ENCODE measurements at regions of chr19 and their contacts with region 1.

Region 1: GRCh38 chr19:57320180-57321084 is at the start of gene ZNF543:
- DNase-seq: peak; percentile 78 to 90 (median 84)
- ATAC-seq: peak; percentile 98
- H3K4me3 ChIP-seq: peak within 1 kb of the TSS; percentile 76
- H3K4me3 Mint-ChIP-seq: peak within 1 kb of the TSS; percentile 87 to 98 (median 94)
- H3K27ac ChIP-seq: peak within 1 kb of the TSS; percentile 83
- H3K27ac Mint-ChIP-seq: peak within 1 kb of the TSS; percentile 82 to 98 (median 96)
- H3K4me1 ChIP-seq: peaks cover 0 to 18% of the 10 kb centered on the region in 2 donors
- H3K4me1 Mint-ChIP-seq: peaks cover 14 to 30% (median 25%) of the 10 kb centered on the region in 7 donors
- H3K27me3 ChIP-seq: peaks cover 0 to 6% of the 10 kb centered on the region in 2 donors
- H3K27me3 Mint-ChIP-seq: peaks cover 20 to 31% (median 24%) of the 10 kb centered on the region in 5 donors
- total RNA-seq, gene ZNF543: 3.6 to 9.0 (median 8.0) TPM

Region 2: DNA sequence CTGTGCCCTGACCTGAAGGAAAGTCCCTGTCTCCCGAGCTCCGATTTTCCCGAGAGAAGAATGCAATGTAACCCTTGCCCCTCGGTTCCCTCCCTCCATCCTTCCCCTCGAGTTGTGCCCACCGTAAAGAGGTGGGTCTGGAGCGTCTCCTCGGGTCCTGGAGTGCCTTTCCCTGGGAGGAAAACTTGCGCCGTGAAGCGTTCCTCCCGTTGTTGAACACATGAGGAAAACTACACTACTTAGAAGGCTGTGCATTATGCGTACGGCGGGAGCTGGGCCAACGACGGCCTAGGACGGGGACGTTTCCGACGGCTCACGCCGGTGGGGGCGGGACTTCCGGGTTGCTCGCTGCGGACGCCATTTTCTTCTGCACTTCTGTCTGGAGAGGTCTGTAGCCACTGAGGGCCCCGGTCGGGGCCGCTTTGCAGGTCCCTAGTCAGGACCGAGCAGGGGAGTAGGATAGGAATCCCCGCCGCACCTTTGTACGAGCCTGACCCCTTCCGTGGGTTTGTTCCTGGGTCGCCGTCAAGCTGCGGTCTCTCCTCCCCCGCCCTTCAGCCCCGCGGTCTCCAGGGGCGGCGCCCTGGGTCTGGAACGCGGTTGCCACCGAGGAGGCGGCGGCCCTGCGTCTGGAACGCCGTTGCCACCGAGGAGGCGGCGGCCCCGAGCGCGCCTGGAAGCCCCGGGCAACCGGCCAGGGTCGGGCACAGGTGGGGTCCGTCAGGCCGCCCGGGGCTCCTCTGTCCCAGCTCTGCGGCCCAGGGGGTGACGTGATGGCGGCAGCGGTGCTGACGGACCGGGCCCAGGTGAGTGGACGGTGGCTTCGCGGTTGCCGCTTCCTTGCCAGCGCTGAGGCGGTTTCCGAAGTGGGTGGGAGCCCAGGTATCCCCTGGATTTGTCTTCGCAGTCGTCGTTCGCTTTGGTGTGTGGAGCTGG is 129.0 kb before region 1 on chr19 and contains the start of gene ZNF264:
- CTCF ChIA-PET with region 1: no interaction called
- POLR2A ChIA-PET with region 1: no interaction called
- intact Hi-C with region 1: loop called (anchors 1 kb)
- DNase-seq: peak; percentile 79 to 90 (median 86)
- ATAC-seq: peak; percentile 98
- H3K4me3 ChIP-seq: peak within 1 kb of the TSS; percentile 95
- H3K4me3 Mint-ChIP-seq: peak within 1 kb of the TSS; percentile 90 to 97 (median 94)
- H3K27ac ChIP-seq: peak within 1 kb of the TSS; percentile 85
- H3K27ac Mint-ChIP-seq: peak within 1 kb of the TSS; percentile 92 to 97 (median 95)
- H3K4me1 ChIP-seq: peaks cover 11 to 22% of the 10 kb centered on the region in 2 donors
- H3K4me1 Mint-ChIP-seq: peaks cover 20 to 40% (median 35%) of the 10 kb centered on the region in 7 donors
- H3K27me3 ChIP-seq: no peaks in the 10 kb centered on the region
- H3K27me3 Mint-ChIP-seq: peaks cover 0 to 11% (median 6%) of the 10 kb centered on the region in 5 donors
- total RNA-seq, gene ZNF264: 31.5 to 65.9 (median 44.3) TPM

Region 3: GRCh38 chr19:57288373-57288772 is 32.1 kb before region 1 on chr19:
- CTCF ChIA-PET with region 1: no interaction called
- POLR2A ChIA-PET with region 1: no interaction called
- intact Hi-C with region 1: no loop called
- DNase-seq: no peak
- ATAC-seq: no peak
- H3K4me3 ChIP-seq: no peak overlapping the region
- H3K4me3 Mint-ChIP-seq: peak overlapping the region in 1 of 10 donors; percentile 54
- H3K27ac ChIP-seq: no peak overlapping the region
- H3K27ac Mint-ChIP-seq: peak overlapping the region in 1 of 9 donors; percentile 5
- H3K4me1 ChIP-seq: no peaks in the 10 kb centered on the region
- H3K4me1 Mint-ChIP-seq: peaks cover 10 to 28% (median 18%) of the 10 kb centered on the region in 7 donors
- H3K27me3 ChIP-seq: no peaks in the 10 kb centered on the region
- H3K27me3 Mint-ChIP-seq: no peaks in the 10 kb centered on the region

Region 4: GRCh38 chr19:57302020-57302465 is 18.4 kb before region 1 on chr19:
- CTCF ChIA-PET with region 1: no interaction called
- POLR2A ChIA-PET with region 1: no interaction called
- intact Hi-C with region 1: no loop called
- DNase-seq: no peak
- ATAC-seq: no peak
- H3K4me3 ChIP-seq: no peak overlapping the region
- H3K4me3 Mint-ChIP-seq: no peak overlapping the region
- H3K27ac ChIP-seq: no peak overlapping the region
- H3K27ac Mint-ChIP-seq: no peak overlapping the region
- H3K4me1 ChIP-seq: no peaks in the 10 kb centered on the region
- H3K4me1 Mint-ChIP-seq: peaks cover 0 to 16% (median 6%) of the 10 kb centered on the region in 7 donors
- H3K27me3 ChIP-seq: no peaks in the 10 kb centered on the region
- H3K27me3 Mint-ChIP-seq: no peaks in the 10 kb centered on the region

Region 5: DNA sequence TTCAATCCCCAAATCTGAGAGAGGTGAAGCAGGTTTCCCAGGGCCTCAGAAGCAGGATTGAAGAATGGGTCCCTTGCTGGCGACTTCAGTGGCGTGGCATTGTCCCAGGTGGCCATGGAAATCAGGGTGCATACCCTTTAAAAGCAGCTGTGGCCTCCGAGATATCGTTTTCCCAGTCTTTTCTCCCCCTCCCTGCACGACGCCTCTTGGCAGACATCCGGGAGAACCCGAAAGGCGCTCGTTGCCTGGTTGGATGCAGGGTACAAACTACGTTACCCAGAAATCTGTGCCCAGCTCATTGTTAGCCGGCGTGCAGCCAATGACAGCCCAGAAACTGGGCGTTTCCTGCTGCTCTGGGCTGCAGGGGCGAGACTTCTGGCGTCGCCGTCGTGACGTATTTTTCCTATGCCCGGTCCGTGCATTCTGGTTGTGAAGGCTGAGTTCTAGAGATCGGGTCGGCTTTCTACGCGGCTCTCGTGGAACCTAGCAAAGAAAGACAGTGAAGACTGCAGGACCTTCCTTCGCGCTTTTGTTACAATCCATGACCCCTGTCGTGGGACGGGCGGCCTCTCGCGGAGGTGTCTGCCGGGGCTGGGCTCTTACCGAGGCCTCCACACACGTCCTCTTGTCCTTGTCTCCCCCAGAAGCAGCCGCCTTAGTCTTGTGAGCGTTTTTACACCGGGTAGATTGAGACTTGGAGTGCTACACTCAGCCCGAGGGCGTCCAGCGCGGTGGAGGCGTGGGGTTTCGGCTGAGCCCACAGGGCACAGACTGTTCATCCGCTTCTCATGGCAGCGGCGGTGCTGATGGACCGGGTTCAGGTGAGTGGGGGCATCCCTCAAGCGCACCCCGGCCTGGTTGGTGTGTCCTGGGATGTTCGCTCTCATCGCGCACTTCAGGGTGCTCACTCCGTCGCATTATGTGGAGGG is 30.7 kb after region 1 on chr19 and contains the start of gene ZNF304:
- CTCF ChIA-PET with region 1: no interaction called
- POLR2A ChIA-PET with region 1: interaction called, 3 read pairs
- intact Hi-C with region 1: loop called (anchors 1 to 2 kb)
- DNase-seq: peak; percentile 51 to 85 (median 76)
- ATAC-seq: peak; percentile 100
- H3K4me3 ChIP-seq: peak within 1 kb of the TSS; percentile 83
- H3K4me3 Mint-ChIP-seq: peak within 1 kb of the TSS; percentile 93 to 97 (median 96)
- H3K27ac ChIP-seq: peak within 1 kb of the TSS; percentile 77
- H3K27ac Mint-ChIP-seq: peak within 1 kb of the TSS; percentile 80 to 96 (median 92)
- H3K4me1 ChIP-seq: peaks cover 11% of the 10 kb centered on the region in 2 donors
- H3K4me1 Mint-ChIP-seq: peaks cover 28 to 43% (median 32%) of the 10 kb centered on the region in 7 donors
- H3K27me3 ChIP-seq: no peaks in the 10 kb centered on the region
- H3K27me3 Mint-ChIP-seq: peaks cover 0 to 11% (median 7%) of the 10 kb centered on the region in 5 donors
- total RNA-seq, gene ZNF304: 6.0 to 12.5 (median 9.0) TPM

Measured in naive thymus-derived CD4-positive, alpha-beta T cell (primary cell).